ENCODE measurements at regions of chr16 and their contacts with region 1.

Region 1: GRCh38 chr16:54929090-54930004 is 1.3 kb upstream of the IRX5 start:
- DNase-seq: peak; percentile 95 to 97 (median 97)
- H3K4me3 ChIP-seq: peak overlapping the region; percentile 40 to 74 (median 58)
- H3K4me3 Mint-ChIP-seq: peak overlapping the region; percentile 86 to 98
- H3K27ac ChIP-seq: peak overlapping the region in 1 of 2 donors; percentile 17
- H3K27ac Mint-ChIP-seq: peak overlapping the region; percentile 50 to 90 (median 60)
- H3K4me1 ChIP-seq: peaks cover 32 to 42% of the 10 kb centered on the region in 2 donors
- H3K4me1 Mint-ChIP-seq: peaks cover 38% of the 10 kb centered on the region
- H3K27me3 ChIP-seq: peaks cover 57 to 84% of the 10 kb centered on the region in 2 donors
- H3K27me3 Mint-ChIP-seq: peaks cover 71 to 84% (median 77%) of the 10 kb centered on the region in 3 donors
- CTCF ChIP-seq: no peak

Region 2: GRCh38 chr16:53703590-53704444 is 1225.5 kb before region 1 on chr16 and contains the starts of genes FTO and RPGRIP1L:
- intact Hi-C with region 1: loop called in 1 of 2 experiments (anchors 10 kb)
- DNase-seq: peak; percentile 98 to 99 (median 98)
- H3K4me3 ChIP-seq: peak within 1 kb of the TSS; percentile 77 to 84 (median 78)
- H3K4me3 Mint-ChIP-seq: peak within 1 kb of the TSS; percentile 98 to 99
- H3K27ac ChIP-seq: peak within 1 kb of the TSS; percentile 13 to 73
- H3K27ac Mint-ChIP-seq: peak within 1 kb of the TSS; percentile 83 to 97 (median 93)
- H3K4me1 ChIP-seq: peaks cover 15 to 18% of the 10 kb centered on the region in 2 donors
- H3K4me1 Mint-ChIP-seq: peaks cover 31% of the 10 kb centered on the region
- H3K27me3 ChIP-seq: no peaks in the 10 kb centered on the region
- H3K27me3 Mint-ChIP-seq: peaks cover 0 to 3% (median 0%) of the 10 kb centered on the region in 3 donors
- CTCF ChIP-seq: no peak
- polyA plus RNA-seq, gene FTO: 16.8 to 51.0 (median 37.7) TPM
- polyA plus RNA-seq, gene RPGRIP1L: 0.11 to 0.18 TPM in 2 of 3 donors, not detected in the other

Region 3: DNA sequence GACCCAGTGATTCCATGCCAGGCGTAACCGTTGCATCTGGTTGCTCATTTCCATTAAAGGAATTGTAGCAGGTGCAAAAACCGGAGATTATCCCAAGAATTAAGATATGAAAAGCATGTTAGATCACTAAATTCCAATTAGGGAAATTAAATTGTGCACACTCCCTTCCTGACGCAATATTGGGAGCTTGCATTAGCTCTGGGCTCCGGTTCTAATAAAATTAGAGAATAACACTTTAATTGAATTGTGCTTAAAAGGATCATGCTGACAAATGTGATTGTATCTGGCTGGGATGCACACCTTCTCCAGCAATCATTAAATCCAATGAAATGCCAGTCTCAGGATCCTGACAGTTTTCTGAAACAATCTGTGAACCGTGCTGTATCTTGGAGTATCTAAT is 39.4 kb after region 1 on chr16:
- intact Hi-C with region 1: no loop called
- DNase-seq: no peak
- H3K4me3 ChIP-seq: no peak overlapping the region
- H3K4me3 Mint-ChIP-seq: no peak overlapping the region
- H3K27ac ChIP-seq: no peak overlapping the region
- H3K27ac Mint-ChIP-seq: no peak overlapping the region
- H3K4me1 ChIP-seq: no peaks in the 10 kb centered on the region
- H3K4me1 Mint-ChIP-seq: no peaks in the 10 kb centered on the region
- H3K27me3 ChIP-seq: no peaks in the 10 kb centered on the region
- H3K27me3 Mint-ChIP-seq: peaks cover 3 to 6% (median 4%) of the 10 kb centered on the region in 3 donors
- CTCF ChIP-seq: no peak